ENCODE measurements at regions of chr9 and their contacts with region 1.

Region 1: GRCh38 chr9:34252670-34253459 is 74.0 kb downstream of the UBAP1 start:
- DNase-seq: peak; percentile 36 to 65 (median 62)
- H3K4me3 ChIP-seq: no peak overlapping the region
- H3K4me3 Mint-ChIP-seq: no peak overlapping the region
- H3K27ac ChIP-seq: no peak overlapping the region
- H3K27ac Mint-ChIP-seq: peak overlapping the region; percentile 9 to 78 (median 74)
- H3K4me1 ChIP-seq: peaks cover 13% of the 10 kb centered on the region
- H3K4me1 Mint-ChIP-seq: peaks cover 4 to 20% (median 11%) of the 10 kb centered on the region in 4 donors
- H3K27me3 ChIP-seq: no peaks in the 10 kb centered on the region
- H3K27me3 Mint-ChIP-seq: no peaks in the 10 kb centered on the region

Region 2: GRCh38 chr9:34010979-34011378 is 241.9 kb before region 1 on chr9:
- CTCF ChIA-PET with region 1: interaction called, 23 read pairs
- POLR2A ChIA-PET with region 1: no interaction called
- intact Hi-C with region 1: loop called (anchors 1 kb)
- DNase-seq: peak in 4 of 5 donors; percentile 14 to 26 (median 20)
- H3K4me3 ChIP-seq: no peak overlapping the region
- H3K4me3 Mint-ChIP-seq: no peak overlapping the region
- H3K27ac ChIP-seq: no peak overlapping the region
- H3K27ac Mint-ChIP-seq: no peak overlapping the region
- H3K4me1 ChIP-seq: no peaks in the 10 kb centered on the region
- H3K4me1 Mint-ChIP-seq: peaks cover 0 to 4% (median 0%) of the 10 kb centered on the region in 4 donors
- H3K27me3 ChIP-seq: no peaks in the 10 kb centered on the region
- H3K27me3 Mint-ChIP-seq: no peaks in the 10 kb centered on the region

Region 3: DNA sequence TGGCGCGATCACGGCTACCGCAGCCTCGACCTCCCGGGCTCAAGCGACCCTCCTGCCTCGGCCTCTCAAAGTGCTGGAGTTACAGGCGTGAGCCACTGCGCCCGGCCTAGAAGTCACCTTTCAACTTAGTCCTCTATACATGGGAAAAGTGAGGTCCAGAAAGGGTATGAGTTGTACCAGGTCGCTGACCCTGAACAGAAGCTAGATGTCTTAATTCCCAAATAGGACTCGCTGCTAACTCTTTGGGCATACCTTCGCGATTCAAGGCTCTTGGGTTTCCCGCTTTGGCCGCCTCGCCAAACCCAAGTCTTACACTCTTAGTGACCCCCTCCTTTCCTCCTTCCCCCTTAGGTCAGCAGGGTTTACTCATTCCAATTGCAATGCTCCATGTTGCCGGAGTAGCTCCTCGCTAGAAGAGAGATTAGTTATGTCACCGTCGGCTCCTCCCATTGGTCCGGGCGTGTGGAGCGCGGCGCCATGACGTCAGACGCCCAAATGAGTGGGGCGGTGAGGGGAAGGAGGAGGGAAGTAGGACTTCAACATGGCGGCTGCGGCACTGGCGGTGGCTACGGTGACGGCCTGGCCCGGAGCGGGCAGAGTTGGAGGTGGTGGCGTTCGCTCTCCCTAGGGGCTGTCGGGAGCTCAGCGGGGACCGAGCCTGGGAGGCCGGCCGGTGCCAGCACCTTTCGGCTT is 74.2 kb before region 1 on chr9 and contains the start of gene UBAP1:
- CTCF ChIA-PET with region 1: interaction called, 8 read pairs
- POLR2A ChIA-PET with region 1: no interaction called
- intact Hi-C with region 1: loop called (anchors 2 kb)
- DNase-seq: peak; percentile 93 to 98 (median 94)
- H3K4me3 ChIP-seq: peak within 1 kb of the TSS; percentile 57 to 74
- H3K4me3 Mint-ChIP-seq: peak within 1 kb of the TSS; percentile 91 to 100 (median 99)
- H3K27ac ChIP-seq: peak within 1 kb of the TSS; percentile 94
- H3K27ac Mint-ChIP-seq: peak within 1 kb of the TSS; percentile 85 to 100 (median 100)
- H3K4me1 ChIP-seq: peaks cover 18% of the 10 kb centered on the region
- H3K4me1 Mint-ChIP-seq: peaks cover 13 to 27% (median 15%) of the 10 kb centered on the region in 4 donors
- H3K27me3 ChIP-seq: no peaks in the 10 kb centered on the region
- H3K27me3 Mint-ChIP-seq: no peaks in the 10 kb centered on the region
- total RNA-seq, gene UBAP1: 34.8 to 36.3 TPM

Region 4: GRCh38 chr9:34227445-34227844 is 25.4 kb before region 1 on chr9:
- CTCF ChIA-PET with region 1: interaction called, 10 read pairs
- POLR2A ChIA-PET with region 1: no interaction called
- intact Hi-C with region 1: no loop called
- DNase-seq: no peak
- H3K4me3 ChIP-seq: no peak overlapping the region
- H3K4me3 Mint-ChIP-seq: no peak overlapping the region
- H3K27ac ChIP-seq: no peak overlapping the region
- H3K27ac Mint-ChIP-seq: peak overlapping the region in 1 of 7 donors; percentile 22
- H3K4me1 ChIP-seq: no peaks in the 10 kb centered on the region
- H3K4me1 Mint-ChIP-seq: peaks cover 8 to 26% (median 12%) of the 10 kb centered on the region in 4 donors
- H3K27me3 ChIP-seq: no peaks in the 10 kb centered on the region
- H3K27me3 Mint-ChIP-seq: no peaks in the 10 kb centered on the region

Region 5: DNA sequence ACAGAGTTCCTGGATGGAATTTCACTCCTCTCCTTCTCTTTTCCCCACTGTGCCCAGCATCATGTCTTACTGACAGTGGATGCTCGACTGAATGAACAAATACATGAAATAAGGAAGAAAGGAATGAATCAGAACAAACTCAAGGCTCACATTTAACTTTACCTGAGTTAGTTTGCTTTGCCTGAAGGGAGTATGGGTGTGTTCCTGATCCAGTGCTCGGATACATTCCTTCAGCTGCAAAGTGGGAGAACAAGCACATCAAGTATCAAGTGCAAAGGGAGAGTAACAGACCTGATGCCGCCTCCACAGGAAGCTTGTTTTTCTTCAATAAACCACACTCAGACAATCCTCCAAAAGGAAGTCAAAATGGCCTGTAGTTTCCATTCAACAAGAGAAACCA is 10.1 kb after region 1 on chr9:
- CTCF ChIA-PET with region 1: interaction called, 35 read pairs
- POLR2A ChIA-PET with region 1: no interaction called
- intact Hi-C with region 1: no loop called
- DNase-seq: no peak
- H3K4me3 ChIP-seq: no peak overlapping the region
- H3K4me3 Mint-ChIP-seq: no peak overlapping the region
- H3K27ac ChIP-seq: no peak overlapping the region
- H3K27ac Mint-ChIP-seq: no peak overlapping the region
- H3K4me1 ChIP-seq: no peaks in the 10 kb centered on the region
- H3K4me1 Mint-ChIP-seq: peaks cover 0 to 3% (median 1%) of the 10 kb centered on the region in 4 donors
- H3K27me3 ChIP-seq: no peaks in the 10 kb centered on the region
- H3K27me3 Mint-ChIP-seq: no peaks in the 10 kb centered on the region

Region 6: DNA sequence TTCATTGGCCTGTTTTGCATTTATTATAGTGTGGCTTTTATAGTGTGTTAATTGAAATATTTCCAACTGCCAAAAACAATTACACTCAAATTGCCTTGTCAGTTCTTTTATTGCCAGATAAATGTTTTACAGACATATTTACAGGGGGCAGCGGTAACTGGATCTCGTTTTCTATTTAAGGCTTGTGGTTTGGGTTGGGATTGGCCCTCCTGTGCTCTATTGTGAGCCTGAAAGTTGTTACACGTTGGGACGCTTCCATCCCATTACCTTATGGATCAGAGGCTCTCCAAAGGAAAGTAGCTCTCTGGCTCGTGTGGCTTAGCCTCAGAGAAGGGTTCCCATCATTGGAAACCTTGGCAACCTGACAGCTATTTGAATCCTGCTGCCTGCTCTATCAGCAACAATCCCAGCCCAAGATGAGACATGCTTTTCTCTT is 226.6 kb after region 1 on chr9:
- CTCF ChIA-PET with region 1: no interaction called
- POLR2A ChIA-PET with region 1: no interaction called
- intact Hi-C with region 1: no loop called
- DNase-seq: no peak
- H3K4me3 ChIP-seq: no peak overlapping the region
- H3K4me3 Mint-ChIP-seq: no peak overlapping the region
- H3K27ac ChIP-seq: no peak overlapping the region
- H3K27ac Mint-ChIP-seq: no peak overlapping the region
- H3K4me1 ChIP-seq: no peaks in the 10 kb centered on the region
- H3K4me1 Mint-ChIP-seq: peaks cover 0 to 2% (median 0%) of the 10 kb centered on the region in 4 donors
- H3K27me3 ChIP-seq: no peaks in the 10 kb centered on the region
- H3K27me3 Mint-ChIP-seq: peaks cover 11% of the 10 kb centered on the region in 2 donors

Measured in CD4-positive, alpha-beta memory T cell (primary cell).